Activated T-helper 1 cell treated with anti-CD3 and anti-CD28 coated beads, Interleukin-12 subunit alpha, Interleukin-12 subunit beta, Interleukin-2, Interleukin-4 antibody, amounts not matched to agents 30 ng/mL and 10 ng/mL and 1 ng/mL, durations not matched to agents 14 hours and 24 hours and 36 hours (primary cell): ENCODE measurements at regions of chr12 and their contacts with region 1.

Region 1: GRCh38 chr12:12032851-12033588 is 37.7 kb upstream of the BCL2L14 start:
- DNase-seq: peak; percentile 57
- H3K4me3 Mint-ChIP-seq: peak overlapping the region; percentile 83
- H3K27ac Mint-ChIP-seq: peak overlapping the region; percentile 97
- H3K4me1 Mint-ChIP-seq: peaks cover 74% of the 10 kb centered on the region
- H3K27me3 Mint-ChIP-seq: no peaks in the 10 kb centered on the region

Region 2: GRCh38 chr12:11486623-11487444 is 546.2 kb before region 1 on chr12:
- intact Hi-C with region 1: loop called (anchors 5 kb)
- DNase-seq: peak; percentile 68
- H3K4me3 Mint-ChIP-seq: no peak overlapping the region
- H3K27ac Mint-ChIP-seq: no peak overlapping the region
- H3K4me1 Mint-ChIP-seq: peaks cover 11% of the 10 kb centered on the region
- H3K27me3 Mint-ChIP-seq: peaks cover 10% of the 10 kb centered on the region

Region 3: DNA sequence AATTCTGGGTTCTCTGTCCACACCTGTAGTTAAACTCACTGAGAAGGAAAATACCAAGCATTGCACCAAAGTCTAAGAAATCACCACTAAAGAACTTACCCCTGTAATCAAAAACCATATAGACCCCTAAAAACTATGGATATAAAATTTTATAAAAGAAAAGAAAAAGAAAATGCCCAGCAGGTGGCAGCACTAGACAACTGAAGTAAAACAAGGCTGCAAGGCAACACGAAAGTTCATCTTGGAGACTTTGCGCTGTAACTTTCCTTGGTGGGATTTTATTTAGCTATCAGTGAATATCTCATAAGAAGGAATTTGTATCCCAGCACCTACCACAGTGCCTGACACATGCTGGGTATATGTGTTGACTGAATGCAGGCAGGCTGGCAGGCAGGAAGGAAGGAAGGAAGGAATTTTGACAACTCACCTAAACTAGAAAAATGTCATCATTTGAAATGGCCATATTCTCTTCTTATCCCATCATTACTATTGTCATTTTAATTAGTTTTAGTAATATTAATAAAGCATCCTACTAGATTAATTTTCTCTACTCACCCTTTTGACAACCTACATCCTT is 451.8 kb before region 1 on chr12:
- intact Hi-C with region 1: loop called (anchors 1 kb)
- DNase-seq: peak; percentile 20
- H3K4me3 Mint-ChIP-seq: peak overlapping the region; percentile 59
- H3K27ac Mint-ChIP-seq: peak overlapping the region; percentile 80
- H3K4me1 Mint-ChIP-seq: peaks cover 24% of the 10 kb centered on the region
- H3K27me3 Mint-ChIP-seq: peaks cover 7% of the 10 kb centered on the region

Region 4: DNA sequence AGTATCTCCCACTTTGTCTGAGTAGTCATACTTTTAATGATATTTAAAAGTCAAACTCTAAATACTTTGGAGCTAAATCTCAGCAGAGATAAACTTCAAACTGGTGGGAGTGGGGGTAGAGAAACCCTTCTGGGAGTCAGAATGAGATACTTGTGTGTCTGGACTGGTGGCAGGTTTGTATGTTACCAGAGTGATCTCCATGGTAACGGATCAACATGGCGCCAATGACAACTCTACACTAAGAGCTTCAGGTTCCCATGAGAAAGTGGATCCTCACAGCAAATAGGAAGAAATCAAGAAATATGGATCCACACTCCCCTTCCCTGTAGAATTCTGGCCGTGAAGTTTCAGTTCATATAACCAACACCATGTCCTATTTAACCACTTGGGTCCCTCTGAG is 261.7 kb before region 1 on chr12:
- intact Hi-C with region 1: loop called (anchors 2 kb)
- DNase-seq: no peak
- H3K4me3 Mint-ChIP-seq: no peak overlapping the region
- H3K27ac Mint-ChIP-seq: peak overlapping the region; percentile 98
- H3K4me1 Mint-ChIP-seq: peaks cover 96% of the 10 kb centered on the region
- H3K27me3 Mint-ChIP-seq: no peaks in the 10 kb centered on the region

Region 5: GRCh38 chr12:11836282-11837151 is 196.5 kb before region 1 on chr12:
- intact Hi-C with region 1: loop called (anchors 1 kb)
- DNase-seq: peak; percentile 53
- H3K4me3 Mint-ChIP-seq: peak overlapping the region; percentile 67
- H3K27ac Mint-ChIP-seq: peak overlapping the region; percentile 94
- H3K4me1 Mint-ChIP-seq: peaks cover 91% of the 10 kb centered on the region
- H3K27me3 Mint-ChIP-seq: no peaks in the 10 kb centered on the region

Region 6: GRCh38 chr12:11981121-11981733 is 51.8 kb before region 1 on chr12:
- intact Hi-C with region 1: loop called (anchors 1 kb)
- DNase-seq: peak; percentile 73
- H3K4me3 Mint-ChIP-seq: peak overlapping the region; percentile 36
- H3K27ac Mint-ChIP-seq: peak overlapping the region; percentile 96
- H3K4me1 Mint-ChIP-seq: peaks cover 62% of the 10 kb centered on the region
- H3K27me3 Mint-ChIP-seq: no peaks in the 10 kb centered on the region

Region 7: GRCh38 chr12:12056951-12057350 is 23.9 kb after region 1 on chr12:
- intact Hi-C with region 1: no loop called
- DNase-seq: no peak
- H3K4me3 Mint-ChIP-seq: no peak overlapping the region
- H3K27ac Mint-ChIP-seq: no peak overlapping the region
- H3K4me1 Mint-ChIP-seq: no peaks in the 10 kb centered on the region
- H3K27me3 Mint-ChIP-seq: peaks cover 2% of the 10 kb centered on the region